ENCODE measurements at regions of chr10 and their contacts with region 1.

Region 1: GRCh38 chr10:67033878-67034277 is 108.0 kb downstream of the LRRTM3 start:
- DNase-seq: no peak
- H3K4me3 Mint-ChIP-seq: no peak overlapping the region
- H3K27ac Mint-ChIP-seq: no peak overlapping the region
- H3K4me1 Mint-ChIP-seq: no peaks in the 10 kb centered on the region
- H3K27me3 Mint-ChIP-seq: peaks cover 5% of the 10 kb centered on the region

Region 2: GRCh38 chr10:66997021-66997420 is 36.9 kb before region 1 on chr10:
- intact Hi-C with region 1: loop called (anchors 5 kb)
- DNase-seq: no peak
- H3K4me3 Mint-ChIP-seq: no peak overlapping the region
- H3K27ac Mint-ChIP-seq: no peak overlapping the region
- H3K4me1 Mint-ChIP-seq: no peaks in the 10 kb centered on the region
- H3K27me3 Mint-ChIP-seq: peaks cover 1% of the 10 kb centered on the region

Region 3: DNA sequence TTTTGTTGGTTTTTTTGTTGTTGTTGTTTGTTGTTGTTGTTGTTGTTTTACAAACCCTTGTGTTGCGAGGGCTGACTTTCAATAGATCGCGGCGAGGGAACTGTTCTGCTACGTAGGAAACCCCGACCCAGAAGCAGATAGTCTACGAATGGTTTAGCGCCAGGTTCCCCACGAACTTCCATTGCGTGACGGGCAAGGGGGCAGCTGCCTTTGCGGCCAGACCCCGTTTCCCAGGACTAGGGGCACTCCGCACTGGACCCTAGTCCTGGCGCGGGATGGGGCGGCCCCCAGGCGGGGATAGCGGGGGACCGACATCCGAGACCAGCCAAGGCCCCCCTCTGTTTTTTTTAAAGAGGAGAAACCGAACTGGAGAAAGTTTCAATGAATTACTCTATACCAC is 11.5 kb after region 1 on chr10:
- intact Hi-C with region 1: no loop called
- DNase-seq: no peak
- H3K4me3 Mint-ChIP-seq: no peak overlapping the region
- H3K27ac Mint-ChIP-seq: no peak overlapping the region
- H3K4me1 Mint-ChIP-seq: no peaks in the 10 kb centered on the region
- H3K27me3 Mint-ChIP-seq: peaks cover 1% of the 10 kb centered on the region